Activated CD4-positive, alpha-beta memory T cell treated with anti-CD3 and anti-CD28 coated beads for 36 hours (primary cell): ENCODE measurements at regions of chr15 and their contacts with region 1.

Region 1: DNA sequence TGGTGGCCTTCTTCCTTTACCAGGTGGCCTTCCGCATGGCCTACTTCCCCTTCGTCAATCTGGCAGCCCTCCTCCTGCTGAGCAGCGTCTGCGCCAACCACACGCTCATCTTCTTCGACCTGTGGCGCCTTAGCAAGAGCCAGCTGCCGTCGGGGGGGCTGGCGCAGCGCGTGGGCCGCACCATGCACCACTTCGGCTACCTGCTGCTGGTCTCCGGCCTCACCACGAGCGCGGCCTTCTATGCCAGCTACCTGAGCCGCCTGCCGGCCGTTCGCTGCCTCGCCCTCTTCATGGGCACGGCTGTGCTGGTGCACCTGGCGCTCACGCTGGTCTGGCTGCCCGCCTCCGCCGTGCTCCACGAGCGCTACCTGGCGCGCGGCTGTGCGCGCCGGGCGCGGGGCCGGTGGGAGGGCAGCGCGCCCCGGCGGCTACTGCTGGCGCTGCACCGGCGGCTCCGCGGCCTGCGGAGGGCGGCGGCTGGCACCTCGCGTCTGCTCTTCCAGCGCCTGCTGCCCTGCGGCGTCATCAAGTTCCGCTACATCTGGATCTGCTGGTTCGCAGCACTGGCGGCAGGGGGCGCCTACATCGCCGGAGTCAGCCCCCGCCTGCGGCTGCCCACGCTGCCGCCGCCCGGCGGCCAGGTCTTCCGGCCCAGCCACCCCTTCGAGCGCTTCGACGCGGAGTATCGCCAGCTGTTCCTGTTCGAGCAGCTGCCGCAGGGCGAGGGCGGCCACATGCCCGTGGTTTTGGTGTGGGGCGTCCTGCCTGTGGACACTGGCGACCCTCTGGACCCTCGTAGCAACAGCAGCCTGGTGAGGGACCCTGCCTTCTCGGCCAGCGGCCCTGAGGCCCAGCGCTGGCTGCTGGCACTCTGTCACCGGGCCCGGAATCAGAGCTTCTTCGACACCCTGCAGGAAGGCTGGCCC is 9.9 kb downstream of the DISP2 start:
- DNase-seq: peak; percentile 93
- H3K4me3 Mint-ChIP-seq: peak overlapping the region; percentile 71
- H3K27ac Mint-ChIP-seq: peak overlapping the region; percentile 2
- H3K4me1 Mint-ChIP-seq: peaks cover 16% of the 10 kb centered on the region
- H3K27me3 Mint-ChIP-seq: no peaks in the 10 kb centered on the region

Region 2: DNA sequence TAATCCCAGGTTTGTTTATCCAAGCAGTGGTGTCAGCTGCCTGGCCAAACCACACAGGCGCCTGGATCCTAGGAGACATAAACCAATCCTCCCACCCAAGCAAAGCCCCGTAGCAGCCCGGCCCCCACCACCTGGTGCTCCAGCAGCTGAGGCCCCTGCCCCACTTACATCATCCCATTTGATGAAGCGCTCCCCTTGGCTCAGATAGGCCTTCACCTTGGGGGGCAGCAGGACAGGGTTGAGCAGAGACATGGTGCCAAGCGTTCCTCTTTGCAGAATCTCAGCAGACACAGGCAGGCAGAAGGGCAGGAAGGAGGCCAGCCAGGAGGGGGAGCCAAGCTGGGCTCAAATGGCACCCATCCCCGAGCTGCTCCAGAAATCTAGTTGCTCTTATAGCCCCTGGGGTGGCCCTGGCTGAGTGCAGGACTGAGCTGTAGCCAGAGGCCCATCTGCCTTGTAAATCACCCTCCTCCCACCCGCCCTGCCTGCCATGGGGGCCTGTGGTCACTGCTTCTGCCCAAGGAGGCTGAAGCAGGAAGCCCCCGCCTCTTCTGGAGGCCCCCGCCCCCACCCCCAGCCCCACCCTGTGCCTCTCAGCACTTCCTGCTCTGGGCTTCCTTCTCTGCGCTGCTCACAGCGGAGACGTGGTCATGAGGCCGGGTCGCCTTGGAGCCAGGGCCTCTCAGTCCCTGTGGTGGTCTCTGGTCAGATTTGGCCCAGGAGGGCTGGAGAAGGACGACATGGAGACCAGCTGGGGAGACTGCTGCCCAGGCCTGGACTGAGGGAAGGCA is 60.3 kb before region 1 on chr15 and contains the start of gene PLCB2:
- CTCF ChIA-PET with region 1: interaction called, 13 read pairs
- POLR2A ChIA-PET with region 1: no interaction called
- intact Hi-C with region 1: no loop called
- DNase-seq: peak; percentile 80
- H3K4me3 Mint-ChIP-seq: peak within 1 kb of the TSS; percentile 96
- H3K27ac Mint-ChIP-seq: peak within 1 kb of the TSS; percentile 97
- H3K4me1 Mint-ChIP-seq: peaks cover 29% of the 10 kb centered on the region
- H3K27me3 Mint-ChIP-seq: no peaks in the 10 kb centered on the region
- total RNA-seq, gene PLCB2: 65.3 to 70.7 TPM

Region 3: DNA sequence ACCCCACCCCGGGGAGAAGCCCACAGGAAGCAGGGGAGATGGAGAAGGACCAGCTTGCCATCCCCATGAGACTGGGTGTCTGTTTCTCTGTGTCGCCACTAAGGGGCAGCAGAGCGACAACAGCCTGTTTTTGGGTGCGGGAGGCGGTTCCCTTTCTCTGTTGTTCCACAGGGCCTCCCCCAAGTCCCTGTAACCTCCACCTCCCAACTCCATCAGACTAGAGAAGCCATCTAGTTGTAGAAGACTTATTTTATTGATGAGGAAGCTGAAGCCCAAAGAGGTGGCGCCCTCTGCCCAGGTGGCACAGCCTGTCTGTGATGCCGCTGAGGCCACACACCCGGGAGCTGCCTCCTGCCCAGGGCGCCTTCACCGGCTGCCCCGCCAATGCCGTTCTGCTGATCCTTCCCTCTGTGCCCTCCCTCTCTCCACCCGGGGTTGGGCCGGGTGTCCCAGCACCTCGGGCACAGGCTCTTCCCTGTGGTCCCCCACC is 23.3 kb before region 1 on chr15:
- CTCF ChIA-PET with region 1: interaction called, 49 read pairs
- POLR2A ChIA-PET with region 1: no interaction called
- intact Hi-C with region 1: loop called (anchors 1 kb)
- DNase-seq: peak; percentile 80
- H3K4me3 Mint-ChIP-seq: no peak overlapping the region
- H3K27ac Mint-ChIP-seq: no peak overlapping the region
- H3K4me1 Mint-ChIP-seq: no peaks in the 10 kb centered on the region
- H3K27me3 Mint-ChIP-seq: no peaks in the 10 kb centered on the region

Region 4: GRCh38 chr15:40382580-40383456 is 14.9 kb after region 1 on chr15 and contains the start of gene KNSTRN:
- CTCF ChIA-PET with region 1: interaction called, 22 read pairs
- POLR2A ChIA-PET with region 1: no interaction called
- intact Hi-C with region 1: no loop called
- DNase-seq: peak; percentile 95
- H3K4me3 Mint-ChIP-seq: peak within 1 kb of the TSS; percentile 87
- H3K27ac Mint-ChIP-seq: peak within 1 kb of the TSS; percentile 34
- H3K4me1 Mint-ChIP-seq: peaks cover 14% of the 10 kb centered on the region
- H3K27me3 Mint-ChIP-seq: no peaks in the 10 kb centered on the region
- total RNA-seq, gene KNSTRN: 59.8 to 61.5 TPM

Region 5: GRCh38 chr15:40405501-40406381 is 37.8 kb after region 1 on chr15 and contains the start of gene IVD:
- CTCF ChIA-PET with region 1: interaction called, 7 read pairs
- POLR2A ChIA-PET with region 1: interaction called, 6 read pairs
- intact Hi-C with region 1: loop called (anchors 2 kb)
- DNase-seq: peak; percentile 95
- H3K4me3 Mint-ChIP-seq: peak within 1 kb of the TSS; percentile 69
- H3K27ac Mint-ChIP-seq: peak within 1 kb of the TSS; percentile 65
- H3K4me1 Mint-ChIP-seq: peaks cover 49% of the 10 kb centered on the region
- H3K27me3 Mint-ChIP-seq: no peaks in the 10 kb centered on the region
- total RNA-seq, gene IVD: 37.3 to 38.7 TPM

Region 6: GRCh38 chr15:40421246-40422157 is 53.6 kb after region 1 on chr15:
- CTCF ChIA-PET with region 1: interaction called, 30 read pairs
- POLR2A ChIA-PET with region 1: no interaction called
- intact Hi-C with region 1: loop called (anchors 1 kb)
- DNase-seq: peak; percentile 87
- H3K4me3 Mint-ChIP-seq: no peak overlapping the region
- H3K27ac Mint-ChIP-seq: no peak overlapping the region
- H3K4me1 Mint-ChIP-seq: no peaks in the 10 kb centered on the region
- H3K27me3 Mint-ChIP-seq: no peaks in the 10 kb centered on the region

Region 7: DNA sequence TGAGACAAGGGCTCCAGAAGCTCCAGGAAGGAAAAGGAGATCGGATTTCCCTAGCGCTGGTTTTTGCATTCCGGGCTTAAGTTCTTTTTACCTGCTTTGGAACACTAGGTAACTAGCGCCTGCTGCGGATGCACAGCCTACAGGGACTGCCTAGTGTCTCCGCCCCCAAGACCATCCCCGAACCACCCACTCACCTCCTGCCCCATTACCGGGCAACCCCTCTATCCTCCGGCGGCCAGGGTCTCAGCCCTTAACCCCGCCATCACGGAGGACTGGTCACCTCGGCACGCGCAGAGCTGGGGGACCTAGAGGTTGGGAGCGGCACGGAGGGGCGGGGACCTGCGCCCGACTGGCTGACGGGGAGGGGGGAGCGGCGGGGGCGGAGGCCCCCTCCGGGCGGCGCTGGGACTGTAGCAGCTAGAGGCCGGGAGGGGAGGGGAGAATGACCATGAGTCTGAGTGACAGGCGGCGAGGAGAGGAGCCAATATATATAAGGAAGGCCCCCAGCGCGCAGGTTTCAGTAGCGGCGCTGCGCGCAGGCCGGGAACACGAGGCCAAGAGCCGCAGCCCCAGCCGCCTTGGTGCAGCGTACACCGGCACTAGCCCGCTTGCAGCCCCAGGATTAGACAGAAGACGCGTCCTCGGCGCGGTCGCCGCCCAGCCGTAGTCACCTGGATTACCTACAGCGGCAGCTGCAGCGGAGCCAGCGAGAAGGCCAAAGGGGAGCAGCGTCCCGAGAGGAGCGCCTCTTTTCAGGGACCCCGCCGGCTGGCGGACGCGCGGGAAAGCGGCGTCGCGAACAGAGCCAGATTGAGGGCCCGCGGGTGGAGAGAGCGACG is 561.1 kb after region 1 on chr15 and contains the start of gene DLL4:
- CTCF ChIA-PET with region 1: no interaction called
- POLR2A ChIA-PET with region 1: no interaction called
- intact Hi-C with region 1: no loop called
- DNase-seq: peak; percentile 53
- H3K4me3 Mint-ChIP-seq: peak within 1 kb of the TSS; percentile 51
- H3K27ac Mint-ChIP-seq: no peak within 1 kb of the TSS
- H3K4me1 Mint-ChIP-seq: peaks cover 40% of the 10 kb centered on the region
- H3K27me3 Mint-ChIP-seq: peaks cover 62% of the 10 kb centered on the region
- total RNA-seq, gene DLL4: not detected